Activated T-helper 2 cell treated with anti-CD3 and anti-CD28 coated beads, Interferon-gamma antibody, Interleukin-2, Interleukin-4, amounts not matched to agents 10 μg/mL and 5 μg/mL and 100 μg/mL, durations not matched to agents 14 hours and 24 hours and 36 hours (primary cell): ENCODE measurements at regions of chr3 and their contacts with region 1.

Region 1: GRCh38 chr3:39327746-39328349 is 1.7 kb upstream of the CCR8 start:
- DNase-seq: no peak
- H3K4me3 Mint-ChIP-seq: peak overlapping the region; percentile 35
- H3K27ac Mint-ChIP-seq: peak overlapping the region; percentile 58
- H3K4me1 Mint-ChIP-seq: peaks cover 65% of the 10 kb centered on the region
- H3K27me3 Mint-ChIP-seq: no peaks in the 10 kb centered on the region

Region 2: GRCh38 chr3:38627956-38628355 is 699.9 kb before region 1 on chr3:
- intact Hi-C with region 1: no loop called
- DNase-seq: no peak
- H3K4me3 Mint-ChIP-seq: no peak overlapping the region
- H3K27ac Mint-ChIP-seq: no peak overlapping the region
- H3K4me1 Mint-ChIP-seq: no peaks in the 10 kb centered on the region
- H3K27me3 Mint-ChIP-seq: no peaks in the 10 kb centered on the region

Region 3: DNA sequence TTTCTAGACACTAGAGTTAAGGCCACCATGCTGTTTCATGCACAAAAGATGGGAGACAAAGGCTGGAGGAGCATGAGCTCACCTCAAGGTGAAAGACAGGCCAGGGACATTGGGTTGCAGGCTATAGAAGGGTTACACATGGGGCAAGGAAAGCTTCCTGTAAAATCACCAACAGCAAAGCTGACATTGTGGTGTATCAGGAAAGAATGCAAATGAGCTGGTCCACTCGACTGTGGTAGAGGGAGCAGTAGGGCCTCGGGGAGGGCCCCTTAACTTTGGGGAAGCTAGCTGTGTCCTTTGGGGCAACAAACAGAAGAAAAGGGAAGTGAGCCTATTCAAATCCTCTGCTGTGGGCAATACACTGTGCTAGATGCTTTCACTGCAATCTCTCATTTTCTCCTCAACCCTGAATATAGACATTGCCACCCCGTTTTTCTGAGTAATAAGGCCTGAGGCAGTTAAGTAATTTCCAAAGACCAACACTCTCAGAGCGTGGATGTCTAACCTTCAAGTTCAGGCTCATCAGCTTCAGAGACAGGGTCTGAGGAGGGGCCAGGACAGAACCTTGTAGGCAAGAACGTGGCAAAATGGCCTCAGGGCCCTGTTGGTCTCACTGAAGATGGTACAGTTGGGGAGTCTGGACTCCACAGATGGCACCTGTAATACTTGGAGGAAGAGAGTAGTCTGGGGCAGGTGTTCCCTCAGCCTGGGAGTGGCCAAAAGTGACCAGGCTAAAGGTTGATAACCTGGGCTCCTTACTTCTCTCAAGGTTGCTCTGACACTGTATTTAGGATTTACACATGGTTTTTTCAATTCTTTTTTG is 72.1 kb before region 1 on chr3:
- intact Hi-C with region 1: loop called (anchors 5 kb)
- DNase-seq: no peak
- H3K4me3 Mint-ChIP-seq: no peak overlapping the region
- H3K27ac Mint-ChIP-seq: peak overlapping the region; percentile 79
- H3K4me1 Mint-ChIP-seq: peaks cover 55% of the 10 kb centered on the region
- H3K27me3 Mint-ChIP-seq: no peaks in the 10 kb centered on the region

Region 4: DNA sequence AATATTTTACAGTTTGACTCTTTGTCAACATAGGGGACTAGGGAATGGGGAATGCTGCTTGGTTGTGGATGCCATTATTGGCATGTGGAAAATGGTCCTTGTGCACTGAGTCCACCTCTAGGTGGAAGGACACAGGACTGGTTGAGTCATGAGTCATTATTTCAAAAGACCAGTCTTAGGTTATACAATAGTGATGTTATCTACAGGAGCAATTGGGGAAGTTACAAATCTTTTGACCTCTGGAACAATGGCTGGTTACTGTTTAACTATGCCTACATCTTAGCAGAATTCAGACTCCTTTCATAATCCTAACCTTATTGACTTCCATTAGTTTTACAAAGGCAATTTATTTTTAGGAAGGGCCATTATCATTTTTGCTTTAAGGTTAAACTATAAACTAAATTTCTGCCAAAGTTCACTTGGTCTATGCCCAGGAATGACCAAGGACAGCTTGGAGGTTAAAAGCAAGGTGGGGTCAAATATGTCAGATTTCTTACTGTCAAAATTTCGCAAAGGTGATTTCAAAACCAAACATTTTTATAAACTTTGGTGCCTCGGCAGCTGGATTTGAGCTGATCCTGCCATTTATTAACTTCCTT is 10.2 kb before region 1 on chr3:
- intact Hi-C with region 1: loop called (anchors 1 kb)
- DNase-seq: no peak
- H3K4me3 Mint-ChIP-seq: no peak overlapping the region
- H3K27ac Mint-ChIP-seq: no peak overlapping the region
- H3K4me1 Mint-ChIP-seq: peaks cover 58% of the 10 kb centered on the region
- H3K27me3 Mint-ChIP-seq: peaks cover 1% of the 10 kb centered on the region

Region 5: DNA sequence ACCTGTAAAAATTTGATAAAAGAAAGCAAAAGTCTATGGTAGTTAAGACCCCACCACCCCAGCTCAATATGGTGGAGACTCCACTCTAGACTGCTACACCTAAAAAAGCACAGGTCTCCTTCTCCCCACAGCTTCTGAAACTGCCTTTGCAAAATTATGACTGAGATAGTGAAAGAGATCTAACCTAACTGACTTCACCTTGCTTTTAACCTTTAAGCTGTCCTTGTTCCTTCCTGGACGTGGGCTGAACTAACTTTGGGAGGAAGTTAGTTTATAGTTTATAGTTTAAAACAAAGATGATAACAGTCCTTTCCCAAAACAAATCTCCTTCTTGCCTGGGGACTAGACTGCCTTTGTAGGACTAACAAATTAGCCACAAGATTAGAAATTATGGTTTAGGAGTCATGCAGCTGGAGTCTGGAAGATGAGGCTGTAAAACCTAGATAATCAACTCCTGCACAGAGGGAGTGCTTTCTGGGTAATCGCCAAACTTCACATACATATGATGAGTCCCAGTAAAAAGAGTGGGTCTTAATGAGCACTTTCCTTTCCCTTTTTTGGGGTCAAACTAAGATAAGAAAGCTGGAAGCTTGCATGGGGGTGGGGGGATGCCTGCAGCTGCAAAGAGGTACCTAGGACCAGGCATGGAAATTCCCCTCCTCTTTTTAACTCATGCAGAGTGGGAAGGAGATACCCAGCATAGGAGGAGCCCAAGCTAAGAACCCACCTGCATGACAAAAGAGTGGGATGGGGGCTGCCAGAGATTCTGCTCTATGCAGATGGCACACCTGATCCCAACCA is 19.1 kb after region 1 on chr3:
- intact Hi-C with region 1: loop called (anchors 1 kb)
- DNase-seq: no peak
- H3K4me3 Mint-ChIP-seq: peak overlapping the region; percentile 26
- H3K27ac Mint-ChIP-seq: peak overlapping the region; percentile 47
- H3K4me1 Mint-ChIP-seq: peaks cover 65% of the 10 kb centered on the region
- H3K27me3 Mint-ChIP-seq: no peaks in the 10 kb centered on the region

Region 6: GRCh38 chr3:39361252-39361927 is 33.5 kb after region 1 on chr3:
- intact Hi-C with region 1: loop called (anchors 1 kb)
- DNase-seq: peak; percentile 75
- H3K4me3 Mint-ChIP-seq: peak overlapping the region; percentile 77
- H3K27ac Mint-ChIP-seq: peak overlapping the region; percentile 88
- H3K4me1 Mint-ChIP-seq: peaks cover 73% of the 10 kb centered on the region
- H3K27me3 Mint-ChIP-seq: no peaks in the 10 kb centered on the region